IMR-90 (cell line): ENCODE measurements at regions of chr2 and their contacts with region 1.

Region 1: GRCh38 chr2:138275881-138276280 is 225.7 kb upstream of the SPOPL start:
- DNase-seq: peak; percentile 79
- ATAC-seq: peak; percentile 72
- H3K4me3 ChIP-seq: no peak overlapping the region
- H3K27ac ChIP-seq: no peak overlapping the region
- H3K4me1 ChIP-seq: peaks cover 13% of the 10 kb centered on the region
- H3K27me3 ChIP-seq: no peaks in the 10 kb centered on the region
- CTCF ChIP-seq: no peak
- POLR2A ChIP-seq: no peak
- RAD21 ChIP-seq: no peak

Region 2: GRCh38 chr2:137947728-137948336 is 328.0 kb before region 1 on chr2:
- CTCF ChIA-PET with region 1: interaction called, 3 read pairs
- POLR2A ChIA-PET with region 1: no interaction called
- dilution Hi-C with region 1: no loop called
- in situ Hi-C with region 1: loop called (anchors 10 kb)
- intact Hi-C with region 1: no loop called
- DNase-seq: peak; percentile 79
- ATAC-seq: peak; percentile 72
- H3K4me3 ChIP-seq: no peak overlapping the region
- H3K27ac ChIP-seq: no peak overlapping the region
- H3K4me1 ChIP-seq: no peaks in the 10 kb centered on the region
- H3K27me3 ChIP-seq: no peaks in the 10 kb centered on the region; the same call in 1 of the 2 replicates
- CTCF ChIP-seq: peak; percentile 75
- POLR2A ChIP-seq: no peak
- RAD21 ChIP-seq: peak; percentile 79

Region 3: GRCh38 chr2:137964066-137964858 is 311.6 kb before region 1 on chr2 and contains the start of gene HNMT:
- CTCF ChIA-PET with region 1: no interaction called
- POLR2A ChIA-PET with region 1: no interaction called
- dilution Hi-C with region 1: no loop called
- in situ Hi-C with region 1: loop called (anchors 10 kb)
- intact Hi-C with region 1: loop called (anchors 10 kb)
- DNase-seq: peak; percentile 55
- ATAC-seq: peak; percentile 76
- H3K4me3 ChIP-seq: peak within 1 kb of the TSS; percentile 80
- H3K27ac ChIP-seq: peak within 1 kb of the TSS; percentile 95
- H3K4me1 ChIP-seq: peaks cover 10% of the 10 kb centered on the region
- H3K27me3 ChIP-seq: no peaks in the 10 kb centered on the region
- CTCF ChIP-seq: no peak
- POLR2A ChIP-seq: no peak
- RAD21 ChIP-seq: no peak
- total RNA-seq, gene HNMT: 12.2 and 14.2 TPM in 2 replicates

Region 4: DNA sequence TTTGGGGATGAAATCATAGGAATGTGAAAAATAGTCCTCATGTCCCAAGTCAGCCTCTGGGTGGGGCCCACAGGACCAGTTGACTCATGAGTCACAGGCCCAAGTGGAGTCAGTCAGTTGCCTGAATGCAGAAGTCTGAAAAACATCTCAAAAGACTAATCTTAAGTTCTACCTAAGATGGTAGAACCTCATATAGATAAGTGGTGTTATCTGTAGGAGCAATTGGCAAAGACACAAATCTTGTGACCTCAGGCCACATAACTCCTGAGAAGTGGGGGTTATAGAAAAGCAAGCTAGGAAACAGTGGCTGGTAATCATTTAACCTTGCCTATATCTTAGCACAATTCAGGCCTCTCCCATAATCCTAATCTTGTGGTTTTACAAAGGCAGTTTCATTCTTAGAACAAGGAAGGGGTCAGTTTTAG is 31.4 kb before region 1 on chr2:
- CTCF ChIA-PET with region 1: no interaction called
- POLR2A ChIA-PET with region 1: no interaction called
- dilution Hi-C with region 1: no loop called
- in situ Hi-C with region 1: no loop called
- intact Hi-C with region 1: no loop called
- DNase-seq: peak; percentile 7
- ATAC-seq: peak; percentile 27; the same call in 1 of the 2 replicates
- H3K4me3 ChIP-seq: no peak overlapping the region
- H3K27ac ChIP-seq: no peak overlapping the region
- H3K4me1 ChIP-seq: peaks cover 1% of the 10 kb centered on the region; the same call in 1 of the 2 replicates
- H3K27me3 ChIP-seq: no peaks in the 10 kb centered on the region
- CTCF ChIP-seq: no peak
- POLR2A ChIP-seq: no peak
- RAD21 ChIP-seq: no peak

Region 5: DNA sequence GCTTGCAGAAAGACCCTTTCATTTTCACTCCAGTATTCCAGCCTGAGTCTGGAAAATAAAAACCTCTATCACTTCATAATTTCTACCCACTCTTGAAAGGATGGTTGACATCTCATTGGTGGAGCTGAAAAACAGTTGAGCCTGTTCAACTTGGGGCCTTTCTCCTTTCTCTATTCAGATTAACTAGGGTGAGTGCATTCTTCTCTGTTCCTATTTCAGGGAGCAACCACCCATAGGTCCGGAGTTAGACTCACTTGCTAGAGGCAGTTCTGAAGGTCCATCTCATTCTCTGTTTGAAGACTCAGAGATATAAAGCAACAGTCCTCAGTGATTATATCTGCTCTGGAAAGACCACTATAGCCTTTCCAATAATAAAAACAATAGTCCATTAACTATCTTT is 57.8 kb after region 1 on chr2:
- CTCF ChIA-PET with region 1: no interaction called
- POLR2A ChIA-PET with region 1: no interaction called
- dilution Hi-C with region 1: no loop called
- in situ Hi-C with region 1: no loop called
- intact Hi-C with region 1: loop called (anchors 1 kb)
- DNase-seq: no peak
- ATAC-seq: no peak
- H3K4me3 ChIP-seq: no peak overlapping the region
- H3K27ac ChIP-seq: no peak overlapping the region
- H3K4me1 ChIP-seq: no peaks in the 10 kb centered on the region
- H3K27me3 ChIP-seq: no peaks in the 10 kb centered on the region
- CTCF ChIP-seq: no peak
- POLR2A ChIP-seq: no peak
- RAD21 ChIP-seq: no peak